Transverse colon (tissue), 4 donors: ENCODE measurements at regions of chr19 and their contacts with region 1.

Region 1: DNA sequence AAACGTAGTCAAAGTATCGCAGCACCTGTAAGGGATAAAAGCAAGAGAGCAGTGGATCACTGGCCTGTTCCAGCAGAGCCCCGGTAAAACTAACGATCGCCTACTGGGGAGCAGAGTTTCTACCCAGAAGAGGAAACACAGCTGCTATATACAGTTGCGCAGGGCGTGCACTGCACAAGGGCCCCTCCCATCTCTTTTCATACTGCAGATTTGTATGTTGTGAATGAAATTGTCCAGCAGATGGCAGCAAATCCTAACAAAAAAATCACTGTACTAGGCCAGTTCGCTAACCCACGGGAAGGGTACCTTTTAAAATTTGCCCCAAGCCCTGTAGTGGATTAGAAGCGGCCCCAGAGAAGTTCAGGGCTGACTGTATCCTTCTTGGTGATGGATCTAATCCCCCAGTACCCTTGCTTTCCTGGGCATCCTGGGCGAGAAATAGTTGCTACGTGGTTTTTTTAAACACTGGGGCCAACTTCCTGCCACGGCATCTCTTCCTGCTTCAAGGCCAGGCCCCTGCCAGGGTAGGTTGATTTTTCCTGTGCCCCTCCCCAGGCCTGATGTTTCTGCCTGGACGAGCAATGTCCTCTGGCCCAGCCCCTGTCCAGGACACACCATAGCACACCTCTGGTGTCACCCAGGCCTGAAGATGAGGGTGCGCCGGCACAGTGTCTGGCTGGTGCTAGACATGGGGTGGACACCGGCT is 127.0 kb downstream of the IER2 start:
- DNase-seq: peak; percentile 58
- H3K4me3 ChIP-seq: no peak overlapping the region
- H3K27ac ChIP-seq: no peak overlapping the region
- H3K4me1 ChIP-seq: peaks cover 0 to 4% (median 1%) of the 10 kb centered on the region in 4 donors
- H3K27me3 ChIP-seq: peaks cover 7% of the 10 kb centered on the region
- CTCF ChIP-seq: peak; percentile 63 to 81 (median 72)
- EP300 ChIP-seq: no peak
- POLR2A ChIP-seq: no peak

Region 2: GRCh38 chr19:13588957-13589833 is 311.9 kb after region 1 on chr19:
- in situ Hi-C with region 1: loop called (anchors 5 to 10 kb)
- intact Hi-C with region 1: loop called (anchors 1 kb)
- DNase-seq: peak; percentile 72
- H3K4me3 ChIP-seq: no peak overlapping the region
- H3K27ac ChIP-seq: no peak overlapping the region
- H3K4me1 ChIP-seq: no peaks in the 10 kb centered on the region
- H3K27me3 ChIP-seq: peaks cover 23% of the 10 kb centered on the region
- CTCF ChIP-seq: peak; percentile 86 to 99 (median 98)
- EP300 ChIP-seq: no peak
- POLR2A ChIP-seq: no peak